ENCODE measurements at regions of chr5 and their contacts with region 1.

Region 1: GRCh38 chr5:134586866-134587524 is 45.6 kb downstream of the SAR1B start:
- DNase-seq: peak; percentile 86 to 96 (median 96)
- ATAC-seq: peak; percentile 90 to 93
- H3K4me3 ChIP-seq: no peak overlapping the region
- H3K27ac ChIP-seq: no peak overlapping the region
- H3K4me1 ChIP-seq: no peaks in the 10 kb centered on the region
- H3K27me3 ChIP-seq: no peaks in the 10 kb centered on the region

Region 2: GRCh38 chr5:134176511-134177368 is 410.3 kb before region 1 on chr5 and contains the start of gene SKP1:
- intact Hi-C with region 1: loop called in 1 of 4 experiments (anchors 10 kb)
- DNase-seq: peak; percentile 87 to 95 (median 94)
- ATAC-seq: peak; percentile 90 to 92
- H3K4me3 ChIP-seq: peak within 1 kb of the TSS; percentile 89
- H3K27ac ChIP-seq: peak within 1 kb of the TSS; percentile 90
- H3K4me1 ChIP-seq: no peaks in the 10 kb centered on the region
- H3K27me3 ChIP-seq: no peaks in the 10 kb centered on the region
- total RNA-seq, gene SKP1: 459 to 523 (median 498) TPM

Region 3: GRCh38 chr5:134304311-134304710 is 282.7 kb before region 1 on chr5:
- intact Hi-C with region 1: loop called (anchors 2 to 5 kb)
- DNase-seq: no peak
- ATAC-seq: no peak
- H3K4me3 ChIP-seq: no peak overlapping the region
- H3K27ac ChIP-seq: no peak overlapping the region
- H3K4me1 ChIP-seq: no peaks in the 10 kb centered on the region
- H3K27me3 ChIP-seq: no peaks in the 10 kb centered on the region

Measured in right cardiac atrium (tissue), 5 donors.